Activated CD4-positive, alpha-beta T cell treated with anti-CD3 and anti-CD28 coated beads, Interleukin-2, amount 10 ng/mL, durations not matched to agents 24 days and 14 days (primary cell): ENCODE measurements at regions of chr16 and their contacts with region 1.

Region 1: GRCh38 chr16:79717333-79718137 is 117.0 kb upstream of the MAF start:
- DNase-seq: no peak
- H3K4me3 Mint-ChIP-seq: no peak overlapping the region
- H3K27ac Mint-ChIP-seq: no peak overlapping the region
- H3K4me1 Mint-ChIP-seq: peaks cover 17% of the 10 kb centered on the region
- H3K27me3 Mint-ChIP-seq: peaks cover 5% of the 10 kb centered on the region

Region 2: DNA sequence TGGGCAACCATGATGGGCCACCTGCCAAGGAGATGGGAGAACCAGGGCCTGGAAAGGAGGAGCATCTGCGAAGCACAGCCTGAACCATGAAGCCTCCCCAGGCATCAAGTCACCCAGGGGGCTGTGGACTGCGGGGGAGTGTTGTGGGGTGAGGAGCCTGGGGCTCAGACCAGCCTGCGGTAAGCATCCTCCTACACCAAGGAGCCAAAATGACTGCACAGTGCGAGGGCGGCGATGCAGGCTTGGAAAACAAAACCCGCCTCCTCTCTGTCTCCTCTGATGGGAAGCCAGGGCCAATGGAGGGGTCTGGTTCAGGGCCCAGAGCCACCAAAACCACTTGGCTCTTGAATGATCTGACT is 98.9 kb before region 1 on chr16:
- intact Hi-C with region 1: loop called (anchors 5 kb)
- DNase-seq: peak; percentile 81
- H3K4me3 Mint-ChIP-seq: peak overlapping the region; percentile 75
- H3K27ac Mint-ChIP-seq: peak overlapping the region; percentile 93
- H3K4me1 Mint-ChIP-seq: peaks cover 56% of the 10 kb centered on the region
- H3K27me3 Mint-ChIP-seq: peaks cover 8% of the 10 kb centered on the region

Region 3: GRCh38 chr16:79751471-79752184 is 34.1 kb after region 1 on chr16:
- intact Hi-C with region 1: loop called (anchors 5 kb)
- DNase-seq: no peak
- H3K4me3 Mint-ChIP-seq: no peak overlapping the region
- H3K27ac Mint-ChIP-seq: no peak overlapping the region
- H3K4me1 Mint-ChIP-seq: peaks cover 30% of the 10 kb centered on the region
- H3K27me3 Mint-ChIP-seq: peaks cover 19% of the 10 kb centered on the region